Activated naive CD4-positive, alpha-beta T cell treated with anti-CD3 and anti-CD28 coated beads for 36 hours (primary cell): ENCODE measurements at regions of chr7 and their contacts with region 1.

Region 1: GRCh38 chr7:30148951-30149471 is 14.2 kb downstream of the MTURN start:
- DNase-seq: peak; percentile 69
- H3K4me3 Mint-ChIP-seq: peak overlapping the region; percentile 49
- H3K27ac Mint-ChIP-seq: peak overlapping the region; percentile 21
- H3K4me1 Mint-ChIP-seq: no peaks in the 10 kb centered on the region
- H3K27me3 Mint-ChIP-seq: no peaks in the 10 kb centered on the region

Region 2: DNA sequence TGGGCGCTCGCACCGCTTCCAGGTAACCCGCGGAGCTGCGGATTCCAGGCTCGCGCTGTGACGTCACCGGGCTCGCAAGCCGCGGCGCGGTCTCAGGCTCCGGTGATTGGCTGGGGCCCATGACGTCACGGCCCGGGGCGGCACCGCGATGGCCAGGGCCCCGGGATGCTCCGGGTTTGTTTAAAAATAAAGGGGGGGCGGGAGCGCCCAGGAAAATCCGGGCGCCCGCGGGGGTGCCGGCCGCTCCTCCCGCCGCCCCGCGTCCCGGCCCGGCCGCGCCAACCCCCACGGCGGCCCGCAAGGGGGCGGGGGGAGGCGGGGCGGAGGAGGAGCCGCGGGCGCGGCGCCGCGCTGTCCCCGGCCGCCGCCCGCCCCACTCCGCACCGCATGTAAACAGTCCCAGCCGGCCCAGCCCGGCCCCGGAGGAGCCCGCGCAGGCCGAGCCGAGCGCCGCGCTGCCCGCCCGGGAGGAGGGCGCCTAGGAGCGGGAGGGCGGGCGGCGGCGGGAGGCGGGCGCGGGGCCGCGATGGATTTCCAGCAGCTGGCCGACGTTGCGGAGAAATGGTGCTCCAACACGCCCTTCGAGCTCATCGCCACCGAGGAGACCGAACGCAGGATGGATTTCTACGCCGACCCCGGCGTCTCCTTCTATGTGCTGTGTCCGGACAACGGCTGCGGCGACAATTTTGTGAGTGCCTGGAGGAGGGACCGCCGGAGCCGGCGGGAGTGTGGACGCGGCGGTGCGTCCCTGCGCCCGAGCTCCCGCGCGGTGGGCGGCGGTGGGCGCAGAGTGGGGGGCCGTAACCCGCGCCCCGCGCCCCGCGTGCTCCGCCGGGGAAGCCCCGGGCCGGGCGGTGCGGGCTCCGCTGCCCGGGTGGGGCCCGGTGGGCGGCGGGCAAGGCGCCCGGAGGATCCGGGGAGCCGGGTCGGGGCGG is 14.1 kb before region 1 on chr7 and contains the start of gene MTURN:
- CTCF ChIA-PET with region 1: interaction called, 3 read pairs
- intact Hi-C with region 1: loop called (anchors 1 kb)
- DNase-seq: peak; percentile 83
- H3K4me3 Mint-ChIP-seq: peak within 1 kb of the TSS; percentile 87
- H3K27ac Mint-ChIP-seq: peak within 1 kb of the TSS; percentile 56
- H3K4me1 Mint-ChIP-seq: no peaks in the 10 kb centered on the region
- H3K27me3 Mint-ChIP-seq: no peaks in the 10 kb centered on the region
- total RNA-seq, gene MTURN: 5.1 to 6.3 TPM

Region 3: DNA sequence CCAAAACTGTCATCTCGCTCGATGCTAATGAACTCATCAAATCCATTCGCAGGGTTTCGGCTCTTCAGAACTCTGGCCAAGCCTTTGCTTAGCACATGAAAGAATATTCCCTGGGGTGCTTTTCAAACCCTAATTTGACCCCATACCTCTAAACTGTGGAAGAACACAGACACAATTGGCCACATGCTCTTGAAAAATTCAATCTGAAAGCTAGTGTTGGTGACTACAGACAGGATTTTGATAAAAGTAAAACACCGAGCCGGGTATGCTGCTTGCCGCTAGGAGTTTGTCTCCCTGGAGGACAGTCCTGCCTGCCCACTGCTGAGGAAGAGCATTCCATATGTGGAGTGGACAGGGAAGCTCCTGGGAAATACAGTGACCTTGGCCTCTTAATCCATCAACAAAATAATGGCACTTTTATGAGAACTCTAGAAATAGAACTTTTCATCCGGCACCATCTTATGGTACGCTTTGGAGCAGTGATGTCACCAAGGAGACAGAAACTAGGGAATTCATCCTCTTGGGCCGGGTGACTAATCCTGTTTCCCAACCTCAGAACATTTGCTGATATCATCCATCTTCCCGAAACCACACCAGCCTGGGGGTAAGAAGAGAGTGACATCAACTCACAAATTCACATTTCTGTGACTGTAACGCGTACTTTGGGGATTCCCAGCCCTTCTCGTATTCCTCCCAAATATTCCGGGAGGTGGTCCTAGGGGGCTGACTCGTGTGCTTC is 20.0 kb after region 1 on chr7:
- CTCF ChIA-PET with region 1: no interaction called
- intact Hi-C with region 1: no loop called
- DNase-seq: no peak
- H3K4me3 Mint-ChIP-seq: no peak overlapping the region
- H3K27ac Mint-ChIP-seq: no peak overlapping the region
- H3K4me1 Mint-ChIP-seq: no peaks in the 10 kb centered on the region
- H3K27me3 Mint-ChIP-seq: no peaks in the 10 kb centered on the region